ENCODE measurements at regions of chr3 and their contacts with region 1.

Region 1: DNA sequence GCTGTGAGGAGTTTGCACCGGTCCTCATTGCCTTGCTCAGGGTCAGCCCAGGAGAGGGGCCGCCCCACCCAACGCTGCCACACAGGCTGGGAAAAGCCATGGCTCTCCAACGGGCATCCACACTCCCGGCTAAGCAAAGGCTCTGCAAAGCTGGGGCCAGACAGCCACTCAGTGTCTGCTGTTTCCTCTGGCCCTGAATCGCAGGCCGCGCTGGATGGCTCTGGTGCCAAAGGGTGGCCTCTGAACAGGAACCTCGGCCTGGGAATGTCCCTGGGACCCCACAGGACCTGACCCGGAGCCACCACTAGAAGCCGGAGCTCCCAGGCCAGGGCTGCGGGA is 42.9 kb downstream of the RPN1 start:
- DNase-seq: no peak
- ATAC-seq: peak; percentile 35

Region 2: DNA sequence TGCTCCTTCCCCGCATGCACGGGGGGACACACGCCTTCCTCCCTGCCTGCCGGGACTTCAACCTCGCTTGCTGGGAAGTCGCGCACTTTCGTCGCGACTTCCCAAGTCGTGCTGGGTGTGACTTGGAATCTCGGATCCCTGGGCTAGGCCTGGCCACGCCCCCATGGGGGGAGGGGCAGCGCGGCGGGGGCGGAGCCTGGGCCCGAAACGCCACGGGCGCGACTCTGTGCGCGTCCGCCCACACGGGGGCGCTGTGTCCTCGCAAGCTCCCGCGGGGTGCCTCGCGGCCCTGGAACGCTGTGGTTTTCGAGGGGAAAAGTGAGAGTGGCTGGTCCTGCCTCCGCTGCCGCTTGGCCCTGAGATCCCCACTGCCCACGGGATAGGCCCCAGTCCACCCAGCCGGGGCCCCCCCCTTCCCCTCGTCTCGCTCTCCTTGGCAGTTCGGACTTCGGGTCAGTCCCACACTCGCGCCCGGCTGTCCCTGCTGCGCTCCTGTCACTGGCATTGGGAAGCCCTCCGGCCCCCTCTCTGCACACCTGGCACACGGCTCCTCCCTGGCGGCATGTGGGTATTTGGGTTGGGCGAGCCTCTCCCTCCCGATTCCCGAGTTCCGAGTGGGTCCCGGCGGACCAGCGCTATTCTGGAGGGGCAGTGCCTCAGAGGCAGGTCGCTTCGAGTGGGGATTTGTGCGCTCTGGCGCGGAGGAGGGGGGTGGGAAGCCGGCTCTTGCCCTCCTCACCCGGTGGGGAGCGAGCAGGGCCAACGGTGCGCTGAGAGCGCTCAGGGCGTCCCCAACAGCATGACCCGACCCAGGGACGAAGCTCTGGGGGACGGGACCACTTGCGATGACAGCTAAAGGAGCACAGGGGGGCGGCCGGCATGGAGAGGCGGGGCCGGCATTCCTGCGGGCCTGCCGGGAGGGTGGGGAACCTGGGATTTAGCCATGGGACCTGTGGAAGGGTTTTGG is 531.9 kb before region 1 on chr3:
- intact Hi-C with region 1: loop called (anchors 5 kb)
- DNase-seq: peak; percentile 95
- ATAC-seq: peak; percentile 92

Region 3: GRCh38 chr3:128170805-128171516 is 436.7 kb before region 1 on chr3:
- intact Hi-C with region 1: loop called (anchors 5 kb)
- DNase-seq: no peak
- ATAC-seq: peak; percentile 69

Region 4: GRCh38 chr3:128426128-128426921 is 181.4 kb before region 1 on chr3:
- intact Hi-C with region 1: loop called (anchors 2 kb)
- DNase-seq: peak; percentile 79
- ATAC-seq: peak; percentile 86

Region 5: DNA sequence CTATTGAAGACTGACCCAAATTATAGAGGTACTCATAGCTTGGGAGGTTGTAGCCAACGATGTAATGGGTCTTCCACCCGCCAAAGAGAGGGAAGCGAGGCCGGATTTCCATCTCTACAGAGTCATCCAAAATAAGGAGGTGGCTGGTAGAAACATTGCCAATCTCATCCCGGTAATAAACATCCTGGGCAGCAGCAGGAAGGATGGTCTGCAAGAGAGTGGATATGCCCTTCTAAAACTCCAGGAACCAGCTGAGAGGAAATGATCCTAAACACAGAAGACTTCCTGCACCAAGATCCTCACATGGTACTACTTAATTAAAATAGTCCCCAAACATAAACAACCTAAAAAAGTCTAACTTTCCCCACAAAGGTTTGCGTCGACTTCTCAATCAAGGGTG is 22.3 kb after region 1 on chr3:
- intact Hi-C with region 1: no loop called
- DNase-seq: no peak
- ATAC-seq: no peak

Region 6: DNA sequence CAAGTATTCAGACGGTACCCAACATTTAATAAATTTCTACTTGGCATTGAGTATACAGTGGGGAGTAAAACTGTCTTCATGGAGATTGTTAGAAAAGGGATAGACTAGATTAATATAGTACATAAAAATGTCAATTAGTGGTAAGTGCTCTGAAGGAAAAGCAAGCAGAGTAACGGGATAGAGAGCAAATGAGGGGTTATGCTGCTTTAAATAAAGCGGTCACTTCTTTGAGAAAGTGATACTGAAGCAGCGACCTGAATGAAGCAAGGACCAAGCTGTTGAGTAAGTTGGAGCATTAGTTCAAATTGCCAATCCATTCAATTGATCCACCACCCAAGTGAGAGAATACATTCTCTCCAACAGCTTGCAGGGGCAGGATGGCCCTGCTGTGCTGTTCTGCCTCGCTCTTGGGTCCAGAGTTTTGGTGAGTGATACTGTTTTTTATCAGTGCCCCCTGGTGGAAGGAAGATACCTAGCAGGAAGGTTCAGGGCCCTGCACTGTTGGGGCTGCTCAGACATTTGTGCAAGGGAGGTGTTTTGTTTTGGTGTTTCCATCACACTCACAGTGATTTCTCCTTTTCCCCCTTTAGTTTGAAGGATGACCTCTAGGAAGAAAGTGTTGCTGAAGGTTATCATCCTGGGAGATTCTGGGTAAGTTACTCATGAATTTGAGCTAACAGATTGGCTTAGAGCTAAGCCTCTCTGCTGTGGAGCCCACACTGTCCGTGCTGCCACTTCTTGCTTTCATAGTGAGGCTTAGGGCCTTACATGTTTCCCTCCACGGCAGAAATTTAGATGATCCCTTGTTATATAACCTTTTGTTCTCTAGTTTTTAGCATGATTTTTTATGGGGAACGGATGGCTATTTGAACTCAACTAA is 187.3 kb after region 1 on chr3:
- intact Hi-C with region 1: no loop called
- DNase-seq: no peak
- ATAC-seq: peak; percentile 89

Measured in Right ventricle myocardium inferior (tissue), 1 donor.